Activated CD4-positive, alpha-beta T cell treated with anti-CD3 and anti-CD28 coated beads, Interleukin-2, amount 10 ng/mL, durations not matched to agents 24 days and 14 days (primary cell): ENCODE measurements at regions of chr11 and their contacts with region 1.

Region 1: GRCh38 chr11:14075118-14076078 is 112.9 kb downstream of the SPON1 start:
- DNase-seq: peak; percentile 87
- H3K4me3 Mint-ChIP-seq: peak overlapping the region; percentile 28
- H3K27ac Mint-ChIP-seq: no peak overlapping the region
- H3K4me1 Mint-ChIP-seq: peaks cover 43% of the 10 kb centered on the region
- H3K27me3 Mint-ChIP-seq: peaks cover 16% of the 10 kb centered on the region

Region 2: GRCh38 chr11:13868710-13869397 is 206.5 kb before region 1 on chr11:
- intact Hi-C with region 1: loop called (anchors 5 kb)
- DNase-seq: peak; percentile 81
- H3K4me3 Mint-ChIP-seq: peak overlapping the region; percentile 47
- H3K27ac Mint-ChIP-seq: peak overlapping the region; percentile 86
- H3K4me1 Mint-ChIP-seq: peaks cover 40% of the 10 kb centered on the region
- H3K27me3 Mint-ChIP-seq: no peaks in the 10 kb centered on the region

Region 3: GRCh38 chr11:13942983-13943382 is 132.4 kb before region 1 on chr11:
- intact Hi-C with region 1: loop called (anchors 5 kb)
- DNase-seq: no peak
- H3K4me3 Mint-ChIP-seq: no peak overlapping the region
- H3K27ac Mint-ChIP-seq: no peak overlapping the region
- H3K4me1 Mint-ChIP-seq: peaks cover 48% of the 10 kb centered on the region
- H3K27me3 Mint-ChIP-seq: peaks cover 6% of the 10 kb centered on the region

Region 4: DNA sequence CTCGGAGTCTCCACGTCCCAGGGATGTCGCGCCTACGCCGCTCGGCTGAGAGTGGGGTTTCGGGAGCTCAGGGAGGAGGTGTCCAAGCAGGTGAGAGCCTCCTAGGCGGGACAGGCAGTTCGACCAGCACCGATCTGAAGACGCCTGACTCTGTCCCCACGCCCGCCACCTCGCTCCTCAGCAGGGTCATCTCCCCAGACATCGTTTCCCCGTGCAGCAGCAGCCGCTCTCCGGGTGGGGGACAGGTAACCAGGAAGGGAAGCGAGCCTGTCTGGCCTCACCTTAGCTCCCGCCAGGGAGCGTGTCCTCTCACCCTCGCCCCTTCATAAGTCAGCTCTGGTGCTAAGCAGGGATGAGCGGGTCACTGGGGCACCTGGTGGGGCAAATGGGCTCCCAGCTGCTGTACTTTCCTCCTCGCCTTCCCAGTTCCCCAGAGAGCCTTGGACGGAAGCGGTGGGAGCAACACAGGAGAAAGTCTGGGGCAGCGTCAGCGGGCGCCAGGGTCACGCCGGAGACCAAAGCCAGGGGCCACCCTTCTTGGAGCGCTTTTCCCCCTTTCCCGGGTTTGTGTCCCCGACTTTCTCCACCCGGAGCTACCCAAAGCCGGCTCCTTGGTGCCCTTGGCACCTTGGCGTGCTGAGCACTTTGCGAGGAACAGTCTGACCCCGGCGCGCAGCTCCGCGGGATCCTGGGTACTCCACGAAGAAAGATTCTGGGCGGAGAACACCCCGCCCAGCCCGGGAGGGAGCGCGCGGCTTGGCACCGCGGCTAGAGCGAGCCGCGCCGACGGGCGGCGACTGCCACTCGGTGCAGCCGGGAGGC is 111.2 kb before region 1 on chr11:
- intact Hi-C with region 1: loop called (anchors 2 kb)
- DNase-seq: no peak
- H3K4me3 Mint-ChIP-seq: peak overlapping the region; percentile 76
- H3K27ac Mint-ChIP-seq: no peak overlapping the region
- H3K4me1 Mint-ChIP-seq: peaks cover 9% of the 10 kb centered on the region
- H3K27me3 Mint-ChIP-seq: peaks cover 71% of the 10 kb centered on the region

Region 5: DNA sequence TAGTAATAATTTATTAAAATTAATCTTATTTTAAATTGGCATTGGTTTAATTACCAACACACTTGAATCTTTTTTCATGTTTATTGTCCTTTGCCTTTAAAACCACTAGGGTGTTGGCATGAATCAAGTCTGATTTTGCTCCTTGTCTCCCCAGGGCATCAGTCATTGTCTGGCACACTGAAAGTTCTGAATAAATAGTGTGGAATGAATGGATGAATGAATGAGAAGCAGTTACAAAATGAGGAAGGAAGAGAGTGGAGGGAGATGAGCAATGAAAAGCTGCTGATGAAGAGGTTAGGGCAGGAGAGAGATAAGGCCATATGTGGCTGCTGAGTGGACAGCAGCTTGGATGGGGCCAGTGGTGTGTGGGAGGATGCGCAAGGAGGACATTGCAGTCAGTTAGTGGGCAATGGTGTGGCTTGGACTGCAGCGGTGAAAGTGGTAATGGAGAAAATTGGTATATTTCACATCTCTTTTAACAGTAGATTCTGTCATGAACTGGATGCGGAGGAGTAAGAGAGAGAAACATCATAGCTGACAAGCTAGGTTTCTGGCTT is 19.2 kb after region 1 on chr11:
- intact Hi-C with region 1: no loop called
- DNase-seq: no peak
- H3K4me3 Mint-ChIP-seq: no peak overlapping the region
- H3K27ac Mint-ChIP-seq: no peak overlapping the region
- H3K4me1 Mint-ChIP-seq: no peaks in the 10 kb centered on the region
- H3K27me3 Mint-ChIP-seq: peaks cover 6% of the 10 kb centered on the region